Heart right ventricle (tissue), 16 donors: ENCODE measurements at regions of chr16 and their contacts with region 1.

Region 1: GRCh38 chr16:30526823-30527635 is 663 bp upstream of the ZNF768 start:
- DNase-seq: peak; percentile 98 to 99
- ATAC-seq: peak; percentile 92 to 97 (median 95)
- H3K4me3 ChIP-seq: peak overlapping the region; percentile 52 to 87 (median 71)
- H3K27ac ChIP-seq: peak overlapping the region; percentile 94 to 100 (median 99)
- H3K4me1 ChIP-seq: peaks cover 8 to 43% (median 38%) of the 10 kb centered on the region in 9 donors
- H3K27me3 ChIP-seq: no peaks in the 10 kb centered on the region
- CTCF ChIP-seq: peak in 6 of 9 donors; percentile 23 to 50 (median 33)

Region 2: GRCh38 chr16:30439720-30440348 is 87.2 kb before region 1 on chr16:
- intact Hi-C with region 1: loop called in 6 of 10 experiments (anchors 2 to 10 kb)
- DNase-seq: no peak
- ATAC-seq: no peak
- H3K4me3 ChIP-seq: no peak overlapping the region
- H3K27ac ChIP-seq: no peak overlapping the region
- H3K4me1 ChIP-seq: peaks cover 0 to 22% (median 14%) of the 10 kb centered on the region in 9 donors
- H3K27me3 ChIP-seq: no peaks in the 10 kb centered on the region
- CTCF ChIP-seq: no peak

Region 3: DNA sequence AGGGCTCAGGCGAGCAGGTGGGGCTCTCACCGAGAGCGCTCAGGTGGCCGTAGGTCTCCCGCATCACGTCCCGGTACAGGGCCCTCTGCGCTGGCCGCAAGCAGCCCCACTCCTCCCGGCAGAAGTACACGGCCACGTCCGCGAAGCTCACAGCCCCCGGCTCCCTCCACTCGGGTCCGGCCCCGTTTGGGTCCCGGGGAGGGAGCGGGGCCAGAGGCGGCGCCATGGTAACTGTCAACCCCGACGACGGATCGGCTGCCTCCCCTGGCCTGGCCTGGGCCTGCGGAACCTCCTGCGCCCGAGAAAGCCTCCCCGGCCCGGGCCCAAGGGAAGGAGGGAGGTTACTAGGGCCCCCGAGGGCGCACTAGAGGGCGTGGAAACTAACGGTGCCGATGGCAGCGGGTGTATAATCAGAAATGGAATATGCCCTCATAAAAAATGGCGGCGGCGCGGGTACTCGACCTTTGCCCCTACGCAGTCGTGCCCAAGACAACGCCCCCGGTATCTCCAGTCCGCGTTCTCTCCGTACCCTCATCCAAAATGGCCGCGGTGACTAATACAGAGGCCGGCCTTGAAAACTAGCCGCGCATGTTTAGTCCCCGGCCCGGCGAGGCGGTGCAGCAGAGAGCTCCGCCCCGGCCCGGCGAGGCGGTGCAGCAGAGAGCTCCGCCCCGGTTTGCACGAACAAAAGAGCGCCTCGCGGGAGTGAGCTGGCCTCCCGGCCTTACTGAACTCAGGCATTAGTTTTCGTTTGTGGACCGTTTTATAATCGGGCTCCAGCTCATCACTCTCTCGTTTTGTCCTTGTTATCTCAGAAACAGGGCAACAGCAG is 31.1 kb after region 1 on chr16 and contains the start of gene ZNF764:
- intact Hi-C with region 1: loop called in 1 of 10 experiments (anchors 2 kb)
- DNase-seq: peak; percentile 96 to 99
- ATAC-seq: peak; percentile 95 to 99 (median 97)
- H3K4me3 ChIP-seq: peak within 1 kb of the TSS; percentile 52 to 98 (median 80)
- H3K27ac ChIP-seq: peak within 1 kb of the TSS; percentile 86 to 99 (median 96)
- H3K4me1 ChIP-seq: peaks cover 0 to 64% (median 47%) of the 10 kb centered on the region in 9 donors
- H3K27me3 ChIP-seq: no peaks in the 10 kb centered on the region
- CTCF ChIP-seq: peak in 1 of 9 donors; percentile 12
- total RNA-seq, gene ZNF764: 6.3 to 15.3 (median 10.3) TPM

Region 4: DNA sequence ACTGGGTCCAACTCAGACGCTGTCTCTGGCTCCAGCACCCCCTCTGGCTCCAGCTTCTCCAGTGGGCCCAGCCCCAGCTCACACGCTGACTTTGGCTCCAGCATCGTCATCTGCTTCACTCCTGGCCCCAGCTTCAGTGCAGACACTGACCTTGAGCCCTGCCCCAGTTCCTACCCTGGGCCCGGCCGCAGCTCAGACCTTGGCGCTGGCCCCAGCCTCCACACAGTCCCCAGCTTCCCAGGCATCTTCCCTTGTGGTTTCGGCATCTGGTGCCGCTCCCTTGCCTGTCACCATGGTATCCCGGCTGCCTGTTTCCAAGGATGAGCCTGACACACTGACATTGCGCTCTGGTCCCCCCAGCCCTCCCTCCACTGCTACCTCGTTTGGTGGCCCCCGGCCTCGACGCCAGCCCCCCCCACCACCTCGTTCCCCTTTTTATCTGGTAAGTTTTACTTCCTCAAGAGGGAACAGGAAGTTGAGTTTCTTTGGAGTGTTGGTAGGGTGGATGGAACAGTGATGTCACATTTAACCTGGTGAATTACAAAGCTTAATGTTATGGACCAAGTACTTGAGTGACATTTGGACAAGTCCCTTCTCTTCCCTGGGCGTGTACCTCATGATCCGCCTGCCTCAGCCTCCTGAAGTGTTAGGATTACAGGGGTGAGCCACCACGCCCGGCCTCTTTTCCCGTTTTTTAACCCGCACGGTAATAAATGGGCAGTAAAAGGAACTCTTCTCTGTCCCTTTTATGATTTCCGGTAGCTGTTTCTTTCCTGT is 197.8 kb after region 1 on chr16:
- intact Hi-C with region 1: no loop called
- DNase-seq: peak; percentile 41 to 43
- ATAC-seq: peak; percentile 61 to 80 (median 74)
- H3K4me3 ChIP-seq: no peak overlapping the region
- H3K27ac ChIP-seq: peak overlapping the region in 7 of 10 donors; percentile 14 to 79 (median 34)
- H3K4me1 ChIP-seq: peaks cover 0 to 36% (median 6%) of the 10 kb centered on the region in 9 donors
- H3K27me3 ChIP-seq: no peaks in the 10 kb centered on the region
- CTCF ChIP-seq: no peak